CD4-positive, alpha-beta T cell (primary cell): ENCODE measurements at regions of chr9 and their contacts with region 1.

Region 1: GRCh38 chr9:10983251-10983650 is 370.4 kb upstream of the PTPRD start:
- DNase-seq: no peak
- ATAC-seq: no peak
- H3K4me3 ChIP-seq: no peak overlapping the region
- H3K4me3 Mint-ChIP-seq: no peak overlapping the region
- H3K27ac ChIP-seq: no peak overlapping the region
- H3K27ac Mint-ChIP-seq: no peak overlapping the region
- H3K4me1 ChIP-seq: no peaks in the 10 kb centered on the region
- H3K4me1 Mint-ChIP-seq: no peaks in the 10 kb centered on the region
- H3K27me3 ChIP-seq: no peaks in the 10 kb centered on the region
- H3K27me3 Mint-ChIP-seq: no peaks in the 10 kb centered on the region
- CTCF ChIP-seq: no peak

Region 2: GRCh38 chr9:9387511-9388115 is 1595.6 kb before region 1 on chr9:
- CTCF ChIA-PET with region 1: no interaction called
- POLR2A ChIA-PET with region 1: no interaction called
- intact Hi-C with region 1: no loop called
- DNase-seq: no peak
- ATAC-seq: no peak
- H3K4me3 ChIP-seq: no peak overlapping the region
- H3K4me3 Mint-ChIP-seq: no peak overlapping the region
- H3K27ac ChIP-seq: no peak overlapping the region
- H3K27ac Mint-ChIP-seq: no peak overlapping the region
- H3K4me1 ChIP-seq: no peaks in the 10 kb centered on the region
- H3K4me1 Mint-ChIP-seq: no peaks in the 10 kb centered on the region
- H3K27me3 ChIP-seq: no peaks in the 10 kb centered on the region
- H3K27me3 Mint-ChIP-seq: no peaks in the 10 kb centered on the region
- CTCF ChIP-seq: no peak

Region 3: GRCh38 chr9:11045589-11045988 is 62.3 kb after region 1 on chr9:
- CTCF ChIA-PET with region 1: no interaction called
- POLR2A ChIA-PET with region 1: no interaction called
- intact Hi-C with region 1: loop called in 1 of 2 experiments (anchors 10 kb)
- DNase-seq: no peak
- ATAC-seq: no peak
- H3K4me3 ChIP-seq: no peak overlapping the region
- H3K4me3 Mint-ChIP-seq: no peak overlapping the region
- H3K27ac ChIP-seq: no peak overlapping the region
- H3K27ac Mint-ChIP-seq: no peak overlapping the region
- H3K4me1 ChIP-seq: no peaks in the 10 kb centered on the region
- H3K4me1 Mint-ChIP-seq: no peaks in the 10 kb centered on the region
- H3K27me3 ChIP-seq: no peaks in the 10 kb centered on the region
- H3K27me3 Mint-ChIP-seq: no peaks in the 10 kb centered on the region
- CTCF ChIP-seq: no peak